Mammary epithelial cell (primary cell): ENCODE measurements at regions of chr17 and their contacts with region 1.

Region 1: GRCh38 chr17:50386510-50386909 is 10.8 kb downstream of the LRRC59 start:
- DNase-seq: no peak
- H3K4me3 ChIP-seq: no peak overlapping the region
- H3K27ac ChIP-seq: no peak overlapping the region
- H3K4me1 ChIP-seq: peaks cover 4% of the 10 kb centered on the region
- H3K27me3 ChIP-seq: no peaks in the 10 kb centered on the region
- CTCF ChIP-seq: no peak

Region 2: DNA sequence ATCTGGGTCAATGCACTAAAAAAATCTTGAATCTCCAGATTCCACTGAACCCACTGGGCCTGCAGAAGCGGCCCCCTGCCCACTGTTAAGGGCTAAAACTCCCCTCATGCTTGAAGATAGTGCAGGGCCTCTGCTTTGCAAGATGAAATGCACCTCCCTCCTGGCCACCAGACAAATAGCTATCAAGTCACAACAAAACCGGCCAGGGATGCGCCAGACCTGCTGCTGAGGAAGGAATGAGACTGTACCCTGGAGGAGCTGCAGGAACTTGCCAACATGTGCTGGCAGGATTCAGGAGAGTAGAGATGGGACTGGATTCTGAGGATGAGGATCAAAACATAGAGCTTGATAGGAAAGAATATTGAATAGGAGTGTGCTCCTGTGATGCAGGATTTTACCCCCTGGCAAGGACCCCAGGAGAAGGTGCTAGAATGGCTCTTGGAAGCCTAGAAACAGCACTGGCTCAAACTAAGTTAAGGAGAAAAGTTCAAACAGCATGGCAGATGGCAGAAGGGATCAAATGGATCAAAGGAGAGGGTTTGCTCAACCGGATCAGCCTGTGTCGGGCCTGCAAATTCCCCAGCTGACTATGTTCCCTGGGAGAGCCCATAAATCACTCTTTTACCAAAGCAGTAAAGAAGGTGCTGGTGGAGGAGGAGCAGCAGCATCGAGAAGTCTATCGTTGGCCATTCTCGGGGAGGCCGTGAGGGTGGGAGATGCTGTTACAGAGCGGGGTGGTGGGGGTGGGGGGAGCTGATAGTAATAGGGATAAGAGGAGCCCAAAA is 67.8 kb before region 1 on chr17:
- CTCF ChIA-PET with region 1: no interaction called
- dilution Hi-C with region 1: loop called (anchors 5 kb)
- in situ Hi-C with region 1: no loop called
- intact Hi-C with region 1: no loop called
- DNase-seq: peak; percentile 73
- H3K4me3 ChIP-seq: no peak overlapping the region
- H3K27ac ChIP-seq: no peak overlapping the region
- H3K4me1 ChIP-seq: peaks cover 33% of the 10 kb centered on the region
- H3K27me3 ChIP-seq: no peaks in the 10 kb centered on the region
- CTCF ChIP-seq: peak in 1 of 2 donors; percentile 57

Region 3: DNA sequence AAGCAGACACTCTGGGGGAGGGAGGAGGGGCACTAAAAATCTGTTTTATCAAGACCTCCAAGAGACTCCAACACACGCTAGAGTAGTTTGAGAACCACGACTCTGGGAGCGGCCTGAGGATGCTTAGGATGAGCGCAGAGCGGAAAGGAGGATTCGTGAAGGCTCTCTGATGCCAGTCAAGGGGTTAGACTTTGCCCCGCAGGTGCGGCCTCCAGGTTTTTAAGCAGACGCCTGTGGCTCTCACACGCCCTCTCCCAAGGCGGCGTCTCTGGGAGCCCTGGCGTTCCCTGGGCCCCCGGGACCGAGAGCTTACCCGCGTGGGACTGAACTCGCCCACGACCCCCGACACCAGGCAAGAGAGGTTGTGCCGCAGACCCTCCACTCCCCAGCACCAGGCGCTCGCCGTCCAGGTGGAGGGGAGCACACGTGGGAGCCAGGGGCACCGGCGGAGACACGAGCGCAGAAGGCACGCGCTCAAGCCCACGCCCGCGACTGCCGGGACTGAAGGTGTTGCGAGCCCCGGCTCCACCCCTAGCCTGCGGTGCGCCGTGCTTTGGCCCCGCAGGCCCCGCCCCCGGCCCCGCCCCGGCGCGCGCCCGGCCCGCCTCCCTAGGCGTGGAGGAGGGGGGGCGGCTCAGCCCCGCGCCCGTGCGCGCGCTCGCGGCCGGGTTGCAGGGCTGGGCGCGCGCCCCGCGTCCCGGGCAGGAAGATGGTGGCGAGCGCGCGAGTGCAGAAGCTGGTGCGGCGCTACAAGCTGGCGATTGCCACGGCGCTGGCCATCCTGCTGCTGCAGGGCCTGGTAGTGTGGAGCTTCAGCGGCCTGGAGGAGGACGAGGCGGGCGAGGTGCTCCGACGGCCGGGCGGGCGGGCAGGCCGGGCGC is 40.8 kb before region 1 on chr17 and contains the start of gene XYLT2:
- CTCF ChIA-PET with region 1: no interaction called
- dilution Hi-C with region 1: loop called (anchors 5 kb)
- in situ Hi-C with region 1: no loop called
- intact Hi-C with region 1: no loop called
- DNase-seq: peak; percentile 78
- H3K4me3 ChIP-seq: peak within 1 kb of the TSS; percentile 81 to 91 (median 89)
- H3K27ac ChIP-seq: peak within 1 kb of the TSS; percentile 58
- H3K4me1 ChIP-seq: peaks cover 24% of the 10 kb centered on the region
- H3K27me3 ChIP-seq: no peaks in the 10 kb centered on the region
- CTCF ChIP-seq: no peak
- total RNA-seq, gene XYLT2: 46.3 to 78.3 TPM

Region 4: GRCh38 chr17:50425682-50426471 is 39.4 kb after region 1 on chr17 and contains the start of gene ACSF2:
- CTCF ChIA-PET with region 1: no interaction called
- dilution Hi-C with region 1: loop called (anchors 5 kb)
- in situ Hi-C with region 1: no loop called
- intact Hi-C with region 1: no loop called
- DNase-seq: peak; percentile 57
- H3K4me3 ChIP-seq: peak within 1 kb of the TSS; percentile 58 to 79 (median 61)
- H3K27ac ChIP-seq: peak within 1 kb of the TSS; percentile 56
- H3K4me1 ChIP-seq: peaks cover 61% of the 10 kb centered on the region
- H3K27me3 ChIP-seq: no peaks in the 10 kb centered on the region
- CTCF ChIP-seq: no peak
- total RNA-seq, gene ACSF2: 28.1 to 37.2 TPM

Region 5: DNA sequence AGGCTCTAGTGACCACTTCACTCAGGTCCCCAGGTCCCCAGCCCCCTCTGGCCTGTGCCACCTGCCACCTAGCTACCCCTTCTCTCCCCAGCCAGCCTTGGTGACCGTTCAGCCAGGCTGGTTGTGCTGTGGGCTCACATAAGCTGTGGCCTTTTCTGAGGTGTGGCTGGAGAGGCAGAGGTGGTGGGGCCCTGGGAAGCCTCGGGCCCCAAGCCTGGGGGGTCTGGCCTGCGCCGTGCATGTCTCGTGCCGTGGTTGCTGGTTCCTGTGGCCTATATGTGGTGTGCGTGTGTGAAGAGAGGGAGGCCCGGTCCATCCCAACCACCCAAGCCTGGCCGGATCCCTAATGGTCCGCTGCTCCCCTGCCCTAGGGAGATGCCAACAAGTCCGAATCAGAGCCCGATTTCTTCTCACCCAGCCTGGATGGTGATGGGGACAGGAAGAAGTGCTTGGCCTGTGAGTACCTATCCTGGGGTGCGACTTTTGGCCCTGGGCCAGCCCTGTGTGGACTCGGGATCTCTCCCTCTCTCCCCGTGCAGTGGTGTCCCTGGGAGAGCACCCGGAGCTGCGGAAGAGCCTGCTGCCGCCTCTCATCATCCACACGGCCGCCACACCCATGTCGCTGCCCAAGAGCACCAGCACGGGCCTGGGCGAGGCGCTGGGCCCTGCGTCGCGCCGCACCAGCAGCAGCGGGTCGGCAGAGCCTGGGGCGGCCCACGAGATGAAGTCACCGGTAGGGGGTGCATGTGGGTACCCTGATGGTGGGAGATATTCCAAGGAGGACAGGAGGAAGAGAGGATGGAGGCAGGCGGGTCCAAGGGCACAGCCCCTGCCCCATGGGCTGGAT is 209.9 kb after region 1 on chr17:
- CTCF ChIA-PET with region 1: no interaction called
- dilution Hi-C with region 1: no loop called
- in situ Hi-C with region 1: no loop called
- intact Hi-C with region 1: no loop called
- DNase-seq: no peak
- H3K4me3 ChIP-seq: no peak overlapping the region
- H3K27ac ChIP-seq: no peak overlapping the region
- H3K4me1 ChIP-seq: no peaks in the 10 kb centered on the region
- H3K27me3 ChIP-seq: peaks cover 5% of the 10 kb centered on the region
- CTCF ChIP-seq: peak; percentile 6 to 32